CD4-positive, alpha-beta T cell (primary cell): ENCODE measurements at regions of chr4 and their contacts with region 1.

Region 1: GRCh38 chr4:38948551-38948950 is 80.9 kb downstream of the FAM114A1 start:
- DNase-seq: no peak
- ATAC-seq: no peak
- H3K4me3 ChIP-seq: no peak overlapping the region
- H3K4me3 Mint-ChIP-seq: no peak overlapping the region
- H3K27ac ChIP-seq: peak overlapping the region in 1 of 2 donors; percentile 23
- H3K27ac Mint-ChIP-seq: peak overlapping the region; percentile 86
- H3K4me1 ChIP-seq: peaks cover 10% of the 10 kb centered on the region
- H3K4me1 Mint-ChIP-seq: peaks cover 25% of the 10 kb centered on the region
- H3K27me3 ChIP-seq: no peaks in the 10 kb centered on the region
- H3K27me3 Mint-ChIP-seq: no peaks in the 10 kb centered on the region
- CTCF ChIP-seq: no peak

Region 2: DNA sequence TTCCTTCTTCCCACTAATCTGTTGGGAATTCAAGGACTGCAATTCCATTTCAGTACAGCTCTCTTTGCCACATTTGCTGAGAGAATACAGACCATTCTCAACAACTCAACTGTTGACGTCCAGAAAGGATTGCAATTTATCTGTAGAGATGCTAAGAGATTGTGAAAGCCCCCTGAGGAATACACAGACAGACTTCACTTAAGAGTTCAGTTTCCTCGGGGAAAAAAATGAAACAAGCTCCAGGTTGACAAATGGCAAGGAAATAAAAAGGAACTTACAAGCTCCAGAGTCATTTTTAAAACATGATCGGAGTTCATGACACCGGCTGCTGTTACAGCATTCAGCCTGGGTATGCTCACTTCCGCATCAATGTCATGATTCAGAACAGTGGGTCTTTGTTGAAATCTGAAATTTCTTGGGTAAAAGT is 179.6 kb before region 1 on chr4:
- CTCF ChIA-PET with region 1: no interaction called
- POLR2A ChIA-PET with region 1: no interaction called
- intact Hi-C with region 1: no loop called
- DNase-seq: peak in 2 of 14 experiments; percentile 35 to 44
- ATAC-seq: no peak
- H3K4me3 ChIP-seq: no peak overlapping the region
- H3K4me3 Mint-ChIP-seq: no peak overlapping the region
- H3K27ac ChIP-seq: no peak overlapping the region
- H3K27ac Mint-ChIP-seq: no peak overlapping the region
- H3K4me1 ChIP-seq: no peaks in the 10 kb centered on the region
- H3K4me1 Mint-ChIP-seq: no peaks in the 10 kb centered on the region
- H3K27me3 ChIP-seq: no peaks in the 10 kb centered on the region
- H3K27me3 Mint-ChIP-seq: no peaks in the 10 kb centered on the region
- CTCF ChIP-seq: no peak

Region 3: DNA sequence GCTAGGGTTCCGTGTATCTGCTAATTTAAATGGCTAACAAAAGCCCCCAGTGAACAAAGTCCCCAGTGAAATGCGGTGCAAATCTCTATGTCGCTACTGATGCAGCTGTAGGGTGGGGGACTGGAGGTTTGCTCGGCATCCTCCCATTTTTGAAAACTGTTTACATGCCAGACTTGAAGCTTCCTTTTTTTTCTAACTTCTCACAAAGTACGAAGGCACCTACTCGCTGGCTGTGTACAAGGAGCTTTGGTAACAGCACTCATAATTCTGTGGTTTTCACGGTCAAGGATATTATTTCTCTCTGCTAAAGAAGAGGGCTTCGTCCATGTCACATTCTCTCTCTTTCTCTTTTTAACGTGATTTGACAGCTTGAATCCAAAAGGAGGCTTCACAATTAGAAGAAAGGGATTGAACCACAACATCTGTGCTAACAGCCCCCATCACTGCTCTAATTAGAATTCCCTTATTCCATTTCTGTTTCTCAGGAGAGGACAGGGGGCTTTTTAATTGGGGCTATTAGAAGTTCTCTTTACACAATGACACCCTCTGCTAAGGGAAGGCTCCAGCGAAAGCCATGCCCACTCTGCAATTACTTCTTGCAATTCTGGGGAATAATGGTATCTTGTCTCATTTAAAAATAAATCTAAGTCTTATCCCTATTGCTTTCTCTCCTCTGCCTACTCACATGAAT is 37.0 kb after region 1 on chr4:
- CTCF ChIA-PET with region 1: no interaction called
- POLR2A ChIA-PET with region 1: no interaction called
- intact Hi-C with region 1: loop called in 1 of 2 experiments (anchors 5 kb)
- DNase-seq: peak in 4 of 14 experiments; percentile 14 to 28 (median 20)
- ATAC-seq: peak; percentile 49
- H3K4me3 ChIP-seq: peak overlapping the region; percentile 17
- H3K4me3 Mint-ChIP-seq: peak overlapping the region; percentile 44
- H3K27ac ChIP-seq: peak overlapping the region in 1 of 2 donors; percentile 26
- H3K27ac Mint-ChIP-seq: peak overlapping the region; percentile 62
- H3K4me1 ChIP-seq: peaks cover 11% of the 10 kb centered on the region
- H3K4me1 Mint-ChIP-seq: peaks cover 49% of the 10 kb centered on the region
- H3K27me3 ChIP-seq: no peaks in the 10 kb centered on the region
- H3K27me3 Mint-ChIP-seq: no peaks in the 10 kb centered on the region
- CTCF ChIP-seq: no peak

Region 4: DNA sequence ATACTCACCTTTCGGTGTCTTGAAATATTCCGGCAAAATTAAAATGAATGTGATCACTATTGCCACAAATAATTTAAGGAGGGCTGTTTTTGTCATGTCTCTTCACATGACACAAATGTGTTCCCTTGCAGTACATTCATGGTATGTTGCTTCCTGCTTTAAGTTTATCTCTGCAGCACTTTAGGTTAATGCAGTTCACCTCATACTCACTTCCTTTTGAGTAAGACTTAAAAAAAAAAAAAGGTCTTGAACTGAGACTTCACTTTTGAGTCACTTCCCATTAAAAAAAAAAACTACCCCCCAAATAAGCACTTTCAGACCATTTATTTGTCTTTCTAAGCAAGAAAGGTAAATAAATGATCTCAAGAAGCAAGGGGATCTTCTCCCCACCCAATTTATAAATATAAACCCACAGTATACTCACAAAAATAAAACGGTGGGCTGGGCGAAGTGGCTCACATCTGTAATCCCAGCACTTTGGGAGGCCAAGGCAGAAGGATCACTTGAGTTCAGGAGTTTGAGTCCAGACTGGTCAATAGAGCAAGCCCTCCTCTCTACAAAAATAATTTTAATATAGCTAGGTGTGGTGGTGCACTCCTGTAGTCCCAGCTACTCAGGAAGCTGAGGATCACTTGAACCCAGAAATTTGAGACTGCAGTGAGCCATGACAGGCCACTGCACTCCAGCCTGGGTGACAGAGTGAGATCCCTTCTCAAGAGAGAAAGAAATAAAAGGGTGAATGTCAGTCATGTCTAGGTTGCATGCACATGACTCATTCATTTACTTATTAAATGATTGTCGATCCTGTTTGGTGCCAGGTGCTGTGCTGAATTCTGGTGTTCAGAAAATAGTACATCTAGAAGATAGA is 83.9 kb after region 1 on chr4 and contains the start of gene TMEM156:
- CTCF ChIA-PET with region 1: interaction called, 5 read pairs
- POLR2A ChIA-PET with region 1: no interaction called
- intact Hi-C with region 1: loop called in 1 of 2 experiments (anchors 1 kb)
- DNase-seq: peak in 6 of 14 experiments; percentile 13 to 89 (median 61)
- ATAC-seq: peak; percentile 92
- H3K4me3 ChIP-seq: peak within 1 kb of the TSS; percentile 62
- H3K4me3 Mint-ChIP-seq: peak within 1 kb of the TSS; percentile 84
- H3K27ac ChIP-seq: peak within 1 kb of the TSS; percentile 62 to 66
- H3K27ac Mint-ChIP-seq: peak within 1 kb of the TSS; percentile 99
- H3K4me1 ChIP-seq: peaks cover 23% of the 10 kb centered on the region
- H3K4me1 Mint-ChIP-seq: peaks cover 41% of the 10 kb centered on the region
- H3K27me3 ChIP-seq: no peaks in the 10 kb centered on the region
- H3K27me3 Mint-ChIP-seq: no peaks in the 10 kb centered on the region
- CTCF ChIP-seq: no peak
- total RNA-seq, gene TMEM156: 18.4 TPM